T-cell (primary cell): ENCODE measurements at regions of chr11 and their contacts with region 1.

Region 1: DNA sequence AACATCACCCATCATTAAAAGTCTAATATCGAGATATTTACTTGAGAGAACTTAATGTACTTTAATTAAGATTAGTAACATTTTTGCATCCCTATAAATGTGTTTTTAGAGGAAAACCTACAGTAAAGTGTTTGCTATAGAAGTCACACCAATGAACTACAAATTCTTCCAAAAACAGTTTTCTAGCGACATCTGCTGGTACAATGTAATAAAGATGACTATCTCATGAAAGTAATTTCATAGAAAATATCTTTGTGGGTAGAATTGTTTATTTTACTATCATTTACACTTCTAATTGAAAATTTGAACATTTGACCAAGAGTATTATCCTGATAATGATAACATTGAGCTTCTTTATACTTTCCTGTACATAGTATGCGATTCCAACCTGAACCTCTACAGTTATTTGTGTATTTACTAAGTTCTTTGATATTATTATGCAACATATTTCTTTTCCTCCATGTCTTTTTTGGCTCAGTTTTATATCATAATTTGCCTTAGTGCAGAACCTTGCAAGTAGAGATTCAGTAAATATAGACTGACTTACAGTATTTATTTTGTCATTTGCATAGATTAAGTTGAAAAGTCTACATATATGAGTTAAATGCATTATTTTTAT is 252.7 kb downstream of the TMEM135 start:
- DNase-seq: peak in 1 of 35 experiments; percentile 70
- ATAC-seq: no peak
- H3K4me3 ChIP-seq: no peak overlapping the region
- H3K4me3 Mint-ChIP-seq: no peak overlapping the region
- H3K27ac ChIP-seq: no peak overlapping the region
- H3K27ac Mint-ChIP-seq: no peak overlapping the region
- H3K4me1 ChIP-seq: no peaks in the 10 kb centered on the region
- H3K4me1 Mint-ChIP-seq: no peaks in the 10 kb centered on the region
- H3K27me3 ChIP-seq: no peaks in the 10 kb centered on the region
- H3K27me3 Mint-ChIP-seq: no peaks in the 10 kb centered on the region

Region 2: GRCh38 chr11:87193756-87194470 is 96.5 kb before region 1 on chr11:
- CTCF ChIA-PET with region 1: interaction called in 1 of 2 experiments, 11 read pairs
- POLR2A ChIA-PET with region 1: no interaction called
- DNase-seq: no peak
- ATAC-seq: no peak
- H3K4me3 ChIP-seq: no peak overlapping the region
- H3K4me3 Mint-ChIP-seq: no peak overlapping the region
- H3K27ac ChIP-seq: no peak overlapping the region
- H3K27ac Mint-ChIP-seq: no peak overlapping the region
- H3K4me1 ChIP-seq: no peaks in the 10 kb centered on the region
- H3K4me1 Mint-ChIP-seq: peaks cover 2 to 14% (median 4%) of the 10 kb centered on the region in 3 donors
- H3K27me3 ChIP-seq: no peaks in the 10 kb centered on the region
- H3K27me3 Mint-ChIP-seq: no peaks in the 10 kb centered on the region

Region 3: GRCh38 chr11:87265132-87265531 is 25.3 kb before region 1 on chr11:
- CTCF ChIA-PET with region 1: interaction called in 1 of 2 experiments, 10 read pairs
- POLR2A ChIA-PET with region 1: no interaction called
- DNase-seq: no peak
- ATAC-seq: no peak
- H3K4me3 ChIP-seq: no peak overlapping the region
- H3K4me3 Mint-ChIP-seq: no peak overlapping the region
- H3K27ac ChIP-seq: no peak overlapping the region
- H3K27ac Mint-ChIP-seq: no peak overlapping the region
- H3K4me1 ChIP-seq: no peaks in the 10 kb centered on the region
- H3K4me1 Mint-ChIP-seq: no peaks in the 10 kb centered on the region
- H3K27me3 ChIP-seq: no peaks in the 10 kb centered on the region
- H3K27me3 Mint-ChIP-seq: no peaks in the 10 kb centered on the region

Region 4: GRCh38 chr11:87275176-87275575 is 15.2 kb before region 1 on chr11:
- CTCF ChIA-PET with region 1: no interaction called
- POLR2A ChIA-PET with region 1: no interaction called
- DNase-seq: no peak
- ATAC-seq: no peak
- H3K4me3 ChIP-seq: no peak overlapping the region
- H3K4me3 Mint-ChIP-seq: no peak overlapping the region
- H3K27ac ChIP-seq: no peak overlapping the region
- H3K27ac Mint-ChIP-seq: no peak overlapping the region
- H3K4me1 ChIP-seq: no peaks in the 10 kb centered on the region
- H3K4me1 Mint-ChIP-seq: no peaks in the 10 kb centered on the region
- H3K27me3 ChIP-seq: no peaks in the 10 kb centered on the region
- H3K27me3 Mint-ChIP-seq: no peaks in the 10 kb centered on the region

Region 5: DNA sequence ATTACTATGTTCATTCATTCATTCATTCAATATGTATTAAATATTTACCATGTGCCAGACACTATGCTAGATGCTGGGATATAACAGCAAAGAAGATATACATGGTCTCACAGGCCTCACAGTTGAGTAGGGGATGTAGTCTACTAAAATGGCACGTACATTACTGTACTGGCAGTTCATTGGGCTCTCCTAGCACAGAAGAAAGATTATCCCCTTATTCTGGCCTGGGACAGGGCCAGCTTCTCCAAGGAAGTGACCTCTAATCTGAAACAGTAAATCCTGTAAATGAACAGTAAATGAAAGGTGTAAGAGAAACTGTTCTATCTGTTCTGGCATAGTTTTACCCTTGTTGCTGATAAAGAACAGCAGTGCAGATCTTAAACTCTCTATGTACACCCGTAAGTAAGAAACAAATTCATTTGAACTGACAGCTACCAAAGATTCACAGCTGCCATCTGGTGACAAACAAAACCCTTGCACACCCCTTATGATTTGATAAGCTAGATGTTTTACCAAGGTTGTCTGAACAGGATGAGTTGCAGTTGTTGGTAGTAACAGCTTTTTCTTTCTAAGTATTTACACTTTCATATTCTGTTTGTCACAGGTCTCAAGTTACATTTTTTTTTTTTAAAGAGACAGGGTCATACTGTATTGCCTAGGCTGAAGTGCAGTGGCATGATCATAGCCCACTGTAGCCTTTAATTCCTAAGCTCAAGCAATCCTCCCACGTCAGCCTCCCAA is 10.4 kb after region 1 on chr11:
- CTCF ChIA-PET with region 1: no interaction called
- POLR2A ChIA-PET with region 1: no interaction called
- DNase-seq: no peak
- ATAC-seq: no peak
- H3K4me3 ChIP-seq: no peak overlapping the region
- H3K4me3 Mint-ChIP-seq: no peak overlapping the region
- H3K27ac ChIP-seq: no peak overlapping the region
- H3K27ac Mint-ChIP-seq: no peak overlapping the region
- H3K4me1 ChIP-seq: no peaks in the 10 kb centered on the region
- H3K4me1 Mint-ChIP-seq: peaks cover 3 to 5% (median 4%) of the 10 kb centered on the region in 3 donors
- H3K27me3 ChIP-seq: no peaks in the 10 kb centered on the region
- H3K27me3 Mint-ChIP-seq: no peaks in the 10 kb centered on the region

Region 6: GRCh38 chr11:87405843-87406242 is 115.4 kb after region 1 on chr11:
- CTCF ChIA-PET with region 1: no interaction called
- POLR2A ChIA-PET with region 1: no interaction called
- DNase-seq: no peak
- ATAC-seq: no peak
- H3K4me3 ChIP-seq: no peak overlapping the region
- H3K4me3 Mint-ChIP-seq: no peak overlapping the region
- H3K27ac ChIP-seq: no peak overlapping the region
- H3K27ac Mint-ChIP-seq: no peak overlapping the region
- H3K4me1 ChIP-seq: no peaks in the 10 kb centered on the region
- H3K4me1 Mint-ChIP-seq: no peaks in the 10 kb centered on the region
- H3K27me3 ChIP-seq: peaks cover 0 to 3% of the 10 kb centered on the region in 2 experiments
- H3K27me3 Mint-ChIP-seq: peaks cover 1 to 9% of the 10 kb centered on the region in 2 donors